ENCODE measurements at regions of chr1 and their contacts with region 1.

Region 1: DNA sequence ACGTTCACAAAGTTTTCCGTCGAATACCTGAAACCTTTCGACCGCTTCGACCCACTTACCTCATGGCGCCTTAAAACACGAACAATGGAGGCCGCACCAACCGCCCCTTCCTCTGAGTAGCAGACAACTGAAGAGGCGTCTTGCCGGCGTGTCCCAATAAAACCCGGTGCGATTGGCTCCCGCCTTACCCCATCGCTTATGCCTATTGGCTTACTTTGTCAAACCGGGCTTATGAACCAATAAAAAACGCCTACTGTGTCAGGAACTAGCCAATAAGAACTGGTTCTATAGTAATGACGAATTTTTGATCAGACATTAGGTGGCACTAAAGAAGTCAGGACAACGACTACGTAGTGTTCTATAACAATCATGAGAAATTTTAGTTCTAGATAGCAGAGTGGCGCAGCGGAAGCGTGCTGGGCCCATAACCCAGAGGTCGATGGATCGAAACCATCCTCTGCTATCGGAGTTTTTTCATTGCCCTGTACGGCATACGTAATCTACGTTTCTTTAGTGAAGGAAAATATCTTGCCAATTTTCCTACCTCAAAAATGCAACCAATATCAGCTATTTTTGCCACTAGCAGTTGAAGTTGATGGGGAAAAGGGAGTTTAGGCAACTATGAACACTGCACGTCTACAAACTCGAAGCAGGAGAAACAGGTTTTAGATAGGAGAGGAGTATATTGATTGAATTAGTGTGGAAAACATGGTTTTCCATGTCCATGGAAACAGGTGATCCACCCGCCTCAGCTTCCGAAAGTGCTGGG is at the start of gene ILF2:
- DNase-seq: peak; percentile 99
- ATAC-seq: peak; percentile 92
- H3K4me3 Mint-ChIP-seq: no peak within 1 kb of the TSS
- H3K27ac Mint-ChIP-seq: no peak within 1 kb of the TSS
- H3K4me1 Mint-ChIP-seq: peaks cover 34% of the 10 kb centered on the region
- H3K27me3 Mint-ChIP-seq: no peaks in the 10 kb centered on the region
- total RNA-seq, gene ILF2: 325 to 435 TPM

Region 2: GRCh38 chr1:153572569-153573015 is 98.5 kb before region 1 on chr1:
- CTCF ChIA-PET with region 1: interaction called, 6 read pairs
- POLR2A ChIA-PET with region 1: no interaction called
- intact Hi-C with region 1: loop called (anchors 1 to 2 kb)
- DNase-seq: peak; percentile 85
- ATAC-seq: peak; percentile 82
- H3K4me3 Mint-ChIP-seq: no peak overlapping the region
- H3K27ac Mint-ChIP-seq: peak overlapping the region; percentile 83
- H3K4me1 Mint-ChIP-seq: peaks cover 48% of the 10 kb centered on the region
- H3K27me3 Mint-ChIP-seq: peaks cover 2% of the 10 kb centered on the region

Region 3: GRCh38 chr1:153727463-153728304 is 56.6 kb after region 1 on chr1 and contains the start of gene INTS3:
- CTCF ChIA-PET with region 1: interaction called, 8 read pairs
- POLR2A ChIA-PET with region 1: no interaction called
- intact Hi-C with region 1: loop called in 1 of 2 experiments (anchors 1 kb)
- DNase-seq: peak; percentile 99
- ATAC-seq: peak; percentile 99
- H3K4me3 Mint-ChIP-seq: peak within 1 kb of the TSS; percentile 93
- H3K27ac Mint-ChIP-seq: peak within 1 kb of the TSS; percentile 95
- H3K4me1 Mint-ChIP-seq: peaks cover 44% of the 10 kb centered on the region
- H3K27me3 Mint-ChIP-seq: no peaks in the 10 kb centered on the region
- total RNA-seq, gene INTS3: 52.0 to 58.0 TPM

Region 4: GRCh38 chr1:153805042-153805745 is 134.2 kb after region 1 on chr1:
- CTCF ChIA-PET with region 1: no interaction called
- POLR2A ChIA-PET with region 1: no interaction called
- intact Hi-C with region 1: loop called in 1 of 2 experiments (anchors 1 kb)
- DNase-seq: peak; percentile 87
- ATAC-seq: peak; percentile 98
- H3K4me3 Mint-ChIP-seq: peak overlapping the region; percentile 28
- H3K27ac Mint-ChIP-seq: peak overlapping the region; percentile 85
- H3K4me1 Mint-ChIP-seq: peaks cover 30% of the 10 kb centered on the region
- H3K27me3 Mint-ChIP-seq: no peaks in the 10 kb centered on the region

Region 5: GRCh38 chr1:153967082-153968000 is 296.3 kb after region 1 on chr1 and contains the start of gene CREB3L4:
- CTCF ChIA-PET with region 1: no interaction called
- POLR2A ChIA-PET with region 1: no interaction called
- intact Hi-C with region 1: loop called in 1 of 2 experiments (anchors 1 kb)
- DNase-seq: peak; percentile 91
- ATAC-seq: peak; percentile 87
- H3K4me3 Mint-ChIP-seq: peak within 1 kb of the TSS; percentile 96
- H3K27ac Mint-ChIP-seq: peak within 1 kb of the TSS; percentile 96
- H3K4me1 Mint-ChIP-seq: peaks cover 38% of the 10 kb centered on the region
- H3K27me3 Mint-ChIP-seq: no peaks in the 10 kb centered on the region
- total RNA-seq, gene CREB3L4: 8.5 to 9.1 TPM

Region 6: DNA sequence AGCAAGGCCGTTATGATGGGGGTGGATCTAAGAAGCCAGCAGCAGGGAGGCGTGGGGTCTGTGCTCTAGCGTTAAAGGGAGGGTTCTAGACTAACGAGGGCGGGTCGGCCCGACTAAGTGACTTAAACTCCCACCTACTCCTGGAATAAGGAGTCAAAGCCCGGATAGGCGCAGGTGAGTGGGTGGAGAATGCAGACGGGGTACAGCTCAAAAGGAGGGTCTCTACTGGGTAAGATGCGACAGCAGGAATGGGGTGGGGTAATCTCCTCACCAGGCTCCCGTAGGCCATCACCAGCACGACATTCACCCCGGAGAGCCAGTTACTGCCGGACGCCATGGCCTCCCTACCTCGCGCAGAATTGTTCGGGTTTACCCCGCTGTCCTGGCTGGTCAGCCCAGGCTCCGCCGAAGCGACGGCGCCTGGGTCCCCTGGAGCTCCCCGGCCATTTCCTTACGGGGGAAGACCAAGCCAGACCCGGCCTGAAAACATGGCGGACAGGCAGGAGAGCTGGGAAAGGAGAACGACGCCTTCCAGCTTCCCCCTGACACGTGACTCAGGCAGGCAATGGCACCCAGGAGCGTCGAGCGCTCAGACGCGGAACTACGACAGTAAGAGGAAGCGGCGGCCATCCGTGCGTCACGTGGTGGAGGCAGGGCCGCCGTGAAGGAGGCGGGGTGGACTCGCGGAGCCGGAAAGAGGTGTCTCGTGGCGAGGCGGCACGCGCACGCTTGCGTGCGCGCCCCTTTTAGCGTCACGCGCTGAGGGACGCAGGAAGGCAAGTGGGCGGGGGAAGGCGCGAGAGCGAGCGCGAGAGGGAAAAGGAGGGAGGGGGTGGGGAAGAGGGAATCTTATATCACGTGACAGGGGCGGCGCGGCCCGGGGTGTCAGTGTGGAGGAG is 549.3 kb after region 1 on chr1 and contains the start of gene UBAP2L:
- CTCF ChIA-PET with region 1: no interaction called
- POLR2A ChIA-PET with region 1: no interaction called
- intact Hi-C with region 1: loop called in 1 of 2 experiments (anchors 1 kb)
- DNase-seq: peak; percentile 99
- ATAC-seq: peak; percentile 92
- H3K4me3 Mint-ChIP-seq: peak within 1 kb of the TSS; percentile 99
- H3K27ac Mint-ChIP-seq: peak within 1 kb of the TSS; percentile 100
- H3K4me1 Mint-ChIP-seq: peaks cover 70% of the 10 kb centered on the region
- H3K27me3 Mint-ChIP-seq: no peaks in the 10 kb centered on the region
- total RNA-seq, gene UBAP2L: 205 to 255 TPM

Measured in activated CD4-positive, alpha-beta T cell treated with anti-CD3 and anti-CD28 coated beads for 36 hours (primary cell).